Aorta (tissue), 5 donors: ENCODE measurements at regions of chr10 and their contacts with region 1.

Region 1: GRCh38 chr10:105872665-105873064 is 1231.6 kb downstream of the SORCS3 start:
- DNase-seq: no peak
- ATAC-seq: no peak
- H3K4me3 ChIP-seq: no peak overlapping the region
- H3K27ac ChIP-seq: no peak overlapping the region
- H3K4me1 ChIP-seq: no peaks in the 10 kb centered on the region
- H3K27me3 ChIP-seq: no peaks in the 10 kb centered on the region

Region 2: DNA sequence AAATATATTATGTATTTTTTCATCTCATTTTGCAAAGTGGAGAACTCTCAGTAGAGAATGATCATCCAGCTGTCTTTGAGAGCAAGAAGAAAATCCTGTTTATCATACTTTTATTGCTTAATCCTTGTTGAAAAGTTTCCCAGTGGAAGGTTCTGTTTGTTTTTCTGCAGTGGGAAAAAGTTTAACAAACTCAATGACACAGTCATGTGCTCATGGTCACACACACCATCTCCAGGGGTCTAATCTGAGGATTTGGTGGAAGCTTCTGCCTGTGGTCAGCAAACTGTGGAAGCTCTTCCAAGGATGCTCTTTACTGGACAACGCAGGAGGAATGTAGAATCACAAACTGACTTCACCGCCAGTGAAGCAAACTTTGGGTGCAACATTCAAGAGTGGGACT is 227.7 kb before region 1 on chr10:
- intact Hi-C with region 1: loop called in 1 of 2 experiments (anchors 5 kb)
- DNase-seq: no peak
- ATAC-seq: no peak
- H3K4me3 ChIP-seq: no peak overlapping the region
- H3K27ac ChIP-seq: no peak overlapping the region
- H3K4me1 ChIP-seq: no peaks in the 10 kb centered on the region
- H3K27me3 ChIP-seq: no peaks in the 10 kb centered on the region

Region 3: DNA sequence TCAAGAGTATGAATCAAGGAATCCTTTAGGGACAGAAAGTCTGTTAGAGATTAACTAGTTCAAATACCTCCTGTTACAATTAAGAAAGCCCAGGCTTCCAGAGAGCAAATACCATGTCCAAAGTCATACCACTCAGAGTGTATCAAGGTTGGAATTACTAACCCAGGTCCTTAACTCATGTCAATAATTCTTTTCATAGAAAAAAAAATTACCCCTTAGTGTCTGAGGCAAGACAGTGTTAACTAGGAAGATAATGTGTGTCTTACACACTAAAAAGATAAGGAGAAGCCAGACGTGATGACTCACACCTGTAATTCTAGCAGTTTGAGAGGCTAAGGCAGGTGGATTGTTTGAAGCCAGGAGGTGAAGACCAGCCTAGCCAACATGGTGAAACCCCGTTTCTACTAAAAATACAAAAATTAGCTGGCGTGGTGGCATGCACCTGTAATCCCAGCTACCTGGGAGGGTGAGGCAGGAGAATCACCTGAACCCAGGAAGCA is 868.4 kb after region 1 on chr10:
- intact Hi-C with region 1: no loop called
- DNase-seq: no peak
- ATAC-seq: no peak
- H3K4me3 ChIP-seq: no peak overlapping the region
- H3K27ac ChIP-seq: no peak overlapping the region
- H3K4me1 ChIP-seq: no peaks in the 10 kb centered on the region
- H3K27me3 ChIP-seq: no peaks in the 10 kb centered on the region